CD4-positive, alpha-beta memory T cell (primary cell): ENCODE measurements at regions of chr11 and their contacts with region 1.

Region 1: GRCh38 chr11:35237860-35238715 is 99.1 kb downstream of the CD44 start:
- DNase-seq: peak; percentile 50 to 64 (median 55)
- H3K4me3 ChIP-seq: no peak overlapping the region
- H3K4me3 Mint-ChIP-seq: peak overlapping the region in 6 of 8 donors; percentile 4 to 66 (median 38)
- H3K27ac ChIP-seq: no peak overlapping the region
- H3K27ac Mint-ChIP-seq: peak overlapping the region; percentile 78 to 97 (median 90)
- H3K4me1 ChIP-seq: peaks cover 73% of the 10 kb centered on the region
- H3K4me1 Mint-ChIP-seq: peaks cover 61 to 94% (median 76%) of the 10 kb centered on the region in 4 donors
- H3K27me3 ChIP-seq: no peaks in the 10 kb centered on the region
- H3K27me3 Mint-ChIP-seq: no peaks in the 10 kb centered on the region

Region 2: DNA sequence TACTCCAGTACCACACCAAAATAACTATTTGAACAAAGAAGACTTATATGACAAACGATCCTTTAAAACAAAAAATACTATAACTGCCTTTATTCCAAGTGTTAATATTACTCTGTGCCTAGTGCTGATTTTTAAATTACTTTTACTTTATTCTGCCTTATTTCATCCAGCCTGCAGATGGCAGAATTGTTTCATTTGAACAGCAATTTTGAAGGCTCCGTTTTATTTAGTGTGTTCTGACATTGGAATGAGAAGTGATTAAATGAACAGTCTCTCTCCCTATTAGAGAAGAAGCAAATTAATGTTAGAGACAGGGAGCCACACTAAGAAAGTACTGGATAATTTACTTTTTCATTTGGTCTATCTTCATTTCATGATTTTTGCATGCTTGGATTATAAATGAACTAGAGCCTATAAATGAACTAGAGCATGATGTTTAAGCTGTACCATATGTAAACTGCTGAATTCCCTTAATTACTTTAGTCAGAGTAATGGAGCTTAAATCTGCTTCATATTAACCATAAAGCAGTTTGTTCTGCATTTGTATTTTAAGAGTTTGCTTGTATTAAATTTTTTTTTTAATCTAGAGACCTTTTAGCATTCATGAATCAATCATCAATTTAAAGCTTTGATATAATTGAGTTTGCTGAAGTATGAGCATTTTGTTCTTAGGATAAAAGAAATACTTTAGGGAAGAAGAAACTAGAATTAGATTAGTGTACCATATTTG is 311.8 kb before region 1 on chr11:
- CTCF ChIA-PET with region 1: interaction called, 6 read pairs
- POLR2A ChIA-PET with region 1: no interaction called
- intact Hi-C with region 1: loop called (anchors 2 kb)
- DNase-seq: peak in 4 of 5 donors; percentile 49 to 57 (median 54)
- H3K4me3 ChIP-seq: no peak overlapping the region
- H3K4me3 Mint-ChIP-seq: no peak overlapping the region
- H3K27ac ChIP-seq: no peak overlapping the region
- H3K27ac Mint-ChIP-seq: peak overlapping the region in 1 of 7 donors; percentile 78
- H3K4me1 ChIP-seq: no peaks in the 10 kb centered on the region
- H3K4me1 Mint-ChIP-seq: peaks cover 8 to 25% (median 15%) of the 10 kb centered on the region in 4 donors
- H3K27me3 ChIP-seq: no peaks in the 10 kb centered on the region
- H3K27me3 Mint-ChIP-seq: no peaks in the 10 kb centered on the region

Region 3: GRCh38 chr11:35082321-35083182 is 155.5 kb before region 1 on chr11:
- CTCF ChIA-PET with region 1: no interaction called
- POLR2A ChIA-PET with region 1: interaction called, 4 read pairs
- intact Hi-C with region 1: loop called (anchors 5 kb)
- DNase-seq: peak; percentile 89 to 96 (median 93)
- H3K4me3 ChIP-seq: peak overlapping the region; percentile 50 to 57
- H3K4me3 Mint-ChIP-seq: peak overlapping the region; percentile 78 to 90 (median 84)
- H3K27ac ChIP-seq: peak overlapping the region; percentile 97
- H3K27ac Mint-ChIP-seq: peak overlapping the region; percentile 94 to 99 (median 98)
- H3K4me1 ChIP-seq: peaks cover 85% of the 10 kb centered on the region
- H3K4me1 Mint-ChIP-seq: peaks cover 73 to 100% (median 87%) of the 10 kb centered on the region in 4 donors
- H3K27me3 ChIP-seq: no peaks in the 10 kb centered on the region
- H3K27me3 Mint-ChIP-seq: no peaks in the 10 kb centered on the region

Region 4: DNA sequence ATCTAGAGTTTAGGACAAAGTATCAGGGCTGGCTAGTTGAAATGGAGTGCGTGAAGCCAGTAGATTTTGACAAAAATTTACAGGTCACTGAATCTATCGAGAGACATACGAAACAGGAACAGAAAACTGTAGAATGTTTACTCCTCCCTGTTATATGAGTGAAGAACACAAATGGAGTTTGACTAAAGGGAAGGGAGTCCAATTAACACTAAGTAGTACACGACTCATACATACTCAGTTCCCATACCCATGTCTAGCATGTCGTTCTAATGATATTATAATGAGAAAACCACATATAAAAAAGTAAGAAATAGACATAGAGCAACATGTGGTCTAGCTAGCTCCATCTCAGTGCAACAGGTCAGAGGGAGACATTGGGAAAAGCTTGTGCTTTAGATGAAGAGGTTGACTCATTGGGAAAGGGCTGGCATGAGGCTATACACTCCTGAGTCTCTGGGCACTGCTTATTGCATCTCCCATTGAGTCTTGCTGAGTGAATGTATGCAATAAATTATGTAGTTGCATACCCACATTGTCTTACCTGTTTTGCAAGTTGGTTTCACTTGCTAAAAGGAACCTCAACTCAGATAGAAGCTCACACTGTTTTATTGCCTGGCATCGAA is 55.7 kb before region 1 on chr11:
- CTCF ChIA-PET with region 1: interaction called, 8 read pairs
- POLR2A ChIA-PET with region 1: interaction called, 24 read pairs
- intact Hi-C with region 1: no loop called
- DNase-seq: peak in 1 of 5 donors; percentile 30
- H3K4me3 ChIP-seq: no peak overlapping the region
- H3K4me3 Mint-ChIP-seq: peak overlapping the region in 6 of 8 donors; percentile 30 to 82 (median 48)
- H3K27ac ChIP-seq: peak overlapping the region; percentile 13
- H3K27ac Mint-ChIP-seq: peak overlapping the region; percentile 73 to 95 (median 91)
- H3K4me1 ChIP-seq: peaks cover 88% of the 10 kb centered on the region
- H3K4me1 Mint-ChIP-seq: peaks cover 65 to 87% (median 75%) of the 10 kb centered on the region in 4 donors
- H3K27me3 ChIP-seq: no peaks in the 10 kb centered on the region
- H3K27me3 Mint-ChIP-seq: no peaks in the 10 kb centered on the region

Region 5: GRCh38 chr11:35214792-35215193 is 23.3 kb before region 1 on chr11:
- CTCF ChIA-PET with region 1: interaction called, 9 read pairs
- POLR2A ChIA-PET with region 1: interaction called, 11 read pairs
- intact Hi-C with region 1: loop called (anchors 1 kb)
- DNase-seq: peak in 1 of 5 donors; percentile 77
- H3K4me3 ChIP-seq: no peak overlapping the region
- H3K4me3 Mint-ChIP-seq: peak overlapping the region in 6 of 8 donors; percentile 7 to 76 (median 16)
- H3K27ac ChIP-seq: no peak overlapping the region
- H3K27ac Mint-ChIP-seq: peak overlapping the region; percentile 78 to 99 (median 91)
- H3K4me1 ChIP-seq: peaks cover 65% of the 10 kb centered on the region
- H3K4me1 Mint-ChIP-seq: peaks cover 57 to 92% (median 73%) of the 10 kb centered on the region in 4 donors
- H3K27me3 ChIP-seq: no peaks in the 10 kb centered on the region
- H3K27me3 Mint-ChIP-seq: no peaks in the 10 kb centered on the region

Region 6: DNA sequence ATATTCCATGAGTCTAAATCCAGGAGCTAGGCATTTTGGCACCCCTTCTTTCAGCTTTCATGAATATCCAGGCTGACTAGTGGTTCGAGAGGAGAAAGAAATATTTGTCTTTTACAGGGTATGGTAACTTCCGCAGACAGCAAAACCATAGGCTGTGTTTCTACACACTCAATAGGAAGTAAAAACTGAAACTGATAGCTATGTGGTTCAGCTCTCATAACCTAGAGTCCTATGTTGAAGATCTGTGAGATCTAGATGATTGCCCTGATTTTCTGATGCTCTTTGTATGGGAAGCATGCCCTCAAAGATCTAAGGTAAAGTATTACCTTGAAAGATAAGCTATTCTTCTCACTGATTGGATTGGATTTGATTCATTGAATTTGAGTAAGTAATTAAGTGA is 19.2 kb after region 1 on chr11:
- CTCF ChIA-PET with region 1: interaction called, 17 read pairs
- POLR2A ChIA-PET with region 1: interaction called, 5 read pairs
- intact Hi-C with region 1: no loop called
- DNase-seq: peak in 4 of 5 donors; percentile 27 to 51 (median 39)
- H3K4me3 ChIP-seq: peak overlapping the region in 1 of 2 donors; percentile 20
- H3K4me3 Mint-ChIP-seq: peak overlapping the region in 7 of 8 donors; percentile 43 to 79 (median 62)
- H3K27ac ChIP-seq: no peak overlapping the region
- H3K27ac Mint-ChIP-seq: peak overlapping the region; percentile 4 to 96 (median 94)
- H3K4me1 ChIP-seq: peaks cover 26% of the 10 kb centered on the region
- H3K4me1 Mint-ChIP-seq: peaks cover 19 to 39% (median 24%) of the 10 kb centered on the region in 4 donors
- H3K27me3 ChIP-seq: no peaks in the 10 kb centered on the region
- H3K27me3 Mint-ChIP-seq: peaks cover 0 to 1% of the 10 kb centered on the region in 2 donors